ENCODE measurements at regions of chr17 and their contacts with region 1.

Region 1: GRCh38 chr17:72120642-72121163 is at the start of gene SOX9:
- DNase-seq: peak; percentile 84 to 91
- ATAC-seq: peak; percentile 87 to 96 (median 91)
- H3K4me3 ChIP-seq: peak within 1 kb of the TSS; percentile 54 to 85 (median 72)
- H3K27ac ChIP-seq: peak within 1 kb of the TSS; percentile 77 to 94 (median 90)
- H3K4me1 ChIP-seq: peaks cover 3 to 54% (median 38%) of the 10 kb centered on the region in 9 donors
- H3K27me3 ChIP-seq: peaks cover 0 to 97% (median 80%) of the 10 kb centered on the region in 7 donors
- CTCF ChIP-seq: no peak
- total RNA-seq, gene SOX9: 7.9 to 25.7 (median 12.8) TPM

Region 2: DNA sequence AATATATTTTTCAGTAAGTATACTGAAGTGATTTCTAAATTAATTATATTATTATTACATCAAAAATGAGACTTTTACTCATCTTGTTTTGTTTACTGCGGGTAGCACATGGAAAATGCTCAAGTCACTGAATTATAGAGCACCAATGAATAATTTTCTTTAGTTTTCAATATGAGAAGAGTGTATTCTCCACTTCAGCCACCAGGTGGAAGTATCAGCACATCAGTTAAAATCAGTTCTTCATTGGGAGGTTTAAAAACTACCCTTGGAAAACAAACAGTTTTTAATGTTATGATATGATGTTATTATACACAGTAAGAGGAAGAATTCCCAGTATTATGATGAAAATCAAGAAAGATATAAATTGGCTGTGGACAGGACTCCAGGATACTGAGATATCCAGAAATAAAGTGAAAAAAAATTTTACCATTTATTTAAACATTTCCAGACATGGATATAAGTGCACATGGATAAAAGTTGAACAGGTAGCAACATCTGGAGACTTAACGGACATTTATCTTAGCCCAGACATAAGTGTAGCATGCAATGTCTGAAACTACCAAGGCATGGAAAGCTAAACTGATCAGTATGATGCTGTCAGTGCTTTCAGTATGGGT is 1484.1 kb before region 1 on chr17:
- intact Hi-C with region 1: loop called in 1 of 10 experiments (anchors 10 kb)
- DNase-seq: peak in 1 of 2 donors; percentile 12
- ATAC-seq: no peak
- H3K4me3 ChIP-seq: no peak overlapping the region
- H3K27ac ChIP-seq: no peak overlapping the region
- H3K4me1 ChIP-seq: no peaks in the 10 kb centered on the region
- H3K27me3 ChIP-seq: peaks cover 0 to 9% (median 0%) of the 10 kb centered on the region in 7 donors
- CTCF ChIP-seq: peak; percentile 65 to 85 (median 79)

Region 3: DNA sequence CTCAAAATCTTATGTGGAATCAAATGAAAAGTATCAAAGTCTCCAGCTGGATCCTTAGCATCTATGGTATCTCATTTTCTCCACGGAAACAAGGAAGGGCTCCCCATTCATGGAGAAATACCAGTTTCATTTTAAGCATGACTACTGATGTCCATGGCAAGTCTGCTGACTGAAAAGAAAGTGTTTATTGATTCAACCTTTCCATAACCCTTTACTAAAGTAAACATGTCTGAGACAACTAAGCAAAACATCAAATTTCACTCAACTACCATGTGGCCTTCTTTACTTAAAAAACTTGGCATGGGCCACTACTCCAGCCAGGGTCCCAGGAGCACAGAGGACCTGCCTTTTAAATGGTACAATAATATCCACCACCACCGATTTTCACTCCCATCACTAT is 927.9 kb before region 1 on chr17:
- intact Hi-C with region 1: loop called in 1 of 10 experiments (anchors 10 kb)
- DNase-seq: no peak
- ATAC-seq: no peak
- H3K4me3 ChIP-seq: no peak overlapping the region
- H3K27ac ChIP-seq: no peak overlapping the region
- H3K4me1 ChIP-seq: no peaks in the 10 kb centered on the region
- H3K27me3 ChIP-seq: no peaks in the 10 kb centered on the region
- CTCF ChIP-seq: no peak

Region 4: DNA sequence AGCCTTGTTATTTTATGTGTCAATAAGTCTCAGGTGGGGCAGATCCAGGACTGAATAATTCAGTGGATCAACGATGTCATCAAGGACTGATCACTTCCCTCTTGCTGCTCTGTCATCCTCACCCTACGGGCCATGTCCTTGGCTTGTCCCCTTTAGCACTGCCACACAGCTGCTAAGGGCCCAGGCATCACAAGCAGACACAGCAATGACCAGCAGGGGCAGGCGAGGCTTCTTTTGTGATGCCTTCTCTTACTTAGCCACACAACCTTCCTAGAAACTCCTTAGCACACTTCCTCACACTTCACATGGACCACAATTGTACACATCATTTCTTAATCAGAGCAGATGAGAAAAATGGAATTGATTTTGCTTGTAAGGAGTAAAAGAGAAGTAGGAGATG is 356.2 kb before region 1 on chr17:
- intact Hi-C with region 1: loop called in 1 of 10 experiments (anchors 10 kb)
- DNase-seq: peak in 1 of 2 donors; percentile 9
- ATAC-seq: peak in 1 of 8 donors; percentile 55
- H3K4me3 ChIP-seq: no peak overlapping the region
- H3K27ac ChIP-seq: no peak overlapping the region
- H3K4me1 ChIP-seq: no peaks in the 10 kb centered on the region
- H3K27me3 ChIP-seq: no peaks in the 10 kb centered on the region
- CTCF ChIP-seq: peak in 7 of 9 donors; percentile 20 to 44 (median 32)

Region 5: GRCh38 chr17:72053449-72053848 is 67.3 kb before region 1 on chr17:
- intact Hi-C with region 1: no loop called
- DNase-seq: no peak
- ATAC-seq: no peak
- H3K4me3 ChIP-seq: peak overlapping the region in 2 of 10 donors; percentile 9 to 22
- H3K27ac ChIP-seq: no peak overlapping the region
- H3K4me1 ChIP-seq: no peaks in the 10 kb centered on the region
- H3K27me3 ChIP-seq: peaks cover 0 to 27% (median 7%) of the 10 kb centered on the region in 7 donors
- CTCF ChIP-seq: no peak

Region 6: DNA sequence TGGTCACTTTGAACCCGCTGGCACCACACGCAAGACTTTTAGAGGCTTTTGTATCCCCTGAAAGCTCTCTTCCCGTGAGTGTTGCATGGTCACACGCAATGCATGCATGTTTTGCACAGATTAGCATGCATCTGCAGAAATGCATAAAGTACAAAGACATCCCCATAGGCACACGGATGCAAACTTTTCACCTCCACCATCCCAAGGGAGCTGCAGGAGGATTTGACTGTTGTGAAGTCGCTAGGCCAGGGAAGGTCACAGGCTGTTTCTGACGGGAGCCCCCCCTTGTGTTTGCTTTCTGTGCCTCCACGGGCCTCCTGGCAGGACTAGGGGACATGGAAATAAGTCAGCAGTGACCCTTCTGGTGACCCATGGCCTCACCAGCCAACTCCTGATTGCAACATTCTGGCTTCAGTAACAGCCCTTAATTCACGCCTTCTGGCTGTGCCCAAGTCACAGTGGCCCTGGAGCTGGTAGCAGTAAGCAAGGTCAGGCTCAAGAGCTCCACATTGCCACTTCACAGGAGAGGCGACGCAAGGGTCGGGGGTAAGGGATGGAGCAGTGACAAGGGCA is 45.2 kb after region 1 on chr17:
- intact Hi-C with region 1: loop called in 2 of 10 experiments (anchors 5 kb)
- DNase-seq: peak in 1 of 2 donors; percentile 18
- ATAC-seq: peak in 6 of 8 donors; percentile 36 to 64 (median 56)
- H3K4me3 ChIP-seq: no peak overlapping the region
- H3K27ac ChIP-seq: no peak overlapping the region
- H3K4me1 ChIP-seq: peaks cover 0 to 14% (median 0%) of the 10 kb centered on the region in 9 donors
- H3K27me3 ChIP-seq: no peaks in the 10 kb centered on the region
- CTCF ChIP-seq: no peak

Region 7: GRCh38 chr17:72191921-72192799 is 71.5 kb after region 1 on chr17:
- intact Hi-C with region 1: loop called in 4 of 10 experiments (anchors 5 to 10 kb)
- DNase-seq: peak; percentile 32 to 37
- ATAC-seq: peak; percentile 75 to 88 (median 82)
- H3K4me3 ChIP-seq: no peak overlapping the region
- H3K27ac ChIP-seq: peak overlapping the region in 9 of 10 donors; percentile 40 to 72 (median 53)
- H3K4me1 ChIP-seq: peaks cover 0 to 30% (median 0%) of the 10 kb centered on the region in 9 donors
- H3K27me3 ChIP-seq: peaks cover 0 to 6% (median 0%) of the 10 kb centered on the region in 7 donors
- CTCF ChIP-seq: no peak

Region 8: DNA sequence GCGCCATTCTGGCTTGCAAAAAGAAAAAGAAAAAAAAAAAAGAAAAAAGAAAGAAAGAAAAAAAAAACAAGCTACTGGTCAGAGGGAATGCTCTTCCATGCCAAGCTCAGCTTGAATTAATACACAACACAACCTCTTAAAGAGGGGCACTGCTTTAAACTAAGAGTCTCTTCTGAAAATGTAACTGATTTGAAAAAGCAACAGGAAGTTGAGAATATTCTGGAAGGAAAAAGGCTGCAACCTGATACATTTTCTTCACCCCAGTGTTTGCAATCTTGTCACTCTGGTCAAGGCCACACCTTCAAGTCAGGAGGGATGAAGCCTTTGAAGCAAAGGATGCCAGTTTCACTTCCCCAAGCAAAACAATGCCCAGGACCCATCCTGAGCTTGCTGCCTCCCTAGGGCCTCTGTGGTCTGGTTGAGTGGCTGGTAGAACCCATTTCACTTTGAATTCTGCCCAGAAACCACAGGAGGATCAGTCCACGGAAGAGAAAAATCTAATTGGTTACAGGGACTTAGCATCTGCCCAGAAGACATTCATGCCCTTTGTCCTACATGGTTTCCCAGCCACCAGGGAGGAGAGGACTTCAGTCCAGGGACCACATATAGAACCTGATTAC is 389.8 kb after region 1 on chr17:
- intact Hi-C with region 1: loop called in 4 of 10 experiments (anchors 5 to 10 kb)
- DNase-seq: no peak
- ATAC-seq: no peak
- H3K4me3 ChIP-seq: no peak overlapping the region
- H3K27ac ChIP-seq: no peak overlapping the region
- H3K4me1 ChIP-seq: peaks cover 0 to 11% (median 5%) of the 10 kb centered on the region in 9 donors
- H3K27me3 ChIP-seq: no peaks in the 10 kb centered on the region
- CTCF ChIP-seq: no peak